ENCODE measurements at regions of chr17 and their contacts with region 1.

Region 1: GRCh38 chr17:73371285-73371684 is 59.5 kb upstream of the CDC42EP4 start:
- DNase-seq: no peak
- ATAC-seq: no peak
- H3K4me3 ChIP-seq: no peak overlapping the region
- H3K4me3 Mint-ChIP-seq: no peak overlapping the region
- H3K27ac ChIP-seq: no peak overlapping the region
- H3K27ac Mint-ChIP-seq: no peak overlapping the region
- H3K4me1 ChIP-seq: no peaks in the 10 kb centered on the region
- H3K4me1 Mint-ChIP-seq: no peaks in the 10 kb centered on the region
- H3K27me3 ChIP-seq: no peaks in the 10 kb centered on the region
- H3K27me3 Mint-ChIP-seq: no peaks in the 10 kb centered on the region
- CTCF ChIP-seq: no peak

Region 2: GRCh38 chr17:72556944-72557826 is 814.1 kb before region 1 on chr17:
- CTCF ChIA-PET with region 1: interaction called, 48 read pairs
- POLR2A ChIA-PET with region 1: no interaction called
- intact Hi-C with region 1: loop called (anchors 1 kb)
- DNase-seq: peak; percentile 15 to 62 (median 47)
- ATAC-seq: no peak
- H3K4me3 ChIP-seq: no peak overlapping the region
- H3K4me3 Mint-ChIP-seq: no peak overlapping the region
- H3K27ac ChIP-seq: no peak overlapping the region
- H3K27ac Mint-ChIP-seq: no peak overlapping the region
- H3K4me1 ChIP-seq: no peaks in the 10 kb centered on the region
- H3K4me1 Mint-ChIP-seq: no peaks in the 10 kb centered on the region
- H3K27me3 ChIP-seq: no peaks in the 10 kb centered on the region
- H3K27me3 Mint-ChIP-seq: peaks cover 2% of the 10 kb centered on the region
- CTCF ChIP-seq: peak; percentile 61

Region 3: GRCh38 chr17:72725433-72726068 is 645.7 kb before region 1 on chr17:
- CTCF ChIA-PET with region 1: interaction called, 135 read pairs
- POLR2A ChIA-PET with region 1: interaction called, 3 read pairs
- intact Hi-C with region 1: loop called in 1 of 2 experiments (anchors 1 kb)
- DNase-seq: peak in 8 of 9 experiments; percentile 10 to 65 (median 48)
- ATAC-seq: peak; percentile 37
- H3K4me3 ChIP-seq: no peak overlapping the region
- H3K4me3 Mint-ChIP-seq: peak overlapping the region; percentile 7
- H3K27ac ChIP-seq: no peak overlapping the region
- H3K27ac Mint-ChIP-seq: peak overlapping the region; percentile 28
- H3K4me1 ChIP-seq: peaks cover 29% of the 10 kb centered on the region
- H3K4me1 Mint-ChIP-seq: peaks cover 32% of the 10 kb centered on the region
- H3K27me3 ChIP-seq: no peaks in the 10 kb centered on the region
- H3K27me3 Mint-ChIP-seq: no peaks in the 10 kb centered on the region
- CTCF ChIP-seq: peak; percentile 92

Region 4: DNA sequence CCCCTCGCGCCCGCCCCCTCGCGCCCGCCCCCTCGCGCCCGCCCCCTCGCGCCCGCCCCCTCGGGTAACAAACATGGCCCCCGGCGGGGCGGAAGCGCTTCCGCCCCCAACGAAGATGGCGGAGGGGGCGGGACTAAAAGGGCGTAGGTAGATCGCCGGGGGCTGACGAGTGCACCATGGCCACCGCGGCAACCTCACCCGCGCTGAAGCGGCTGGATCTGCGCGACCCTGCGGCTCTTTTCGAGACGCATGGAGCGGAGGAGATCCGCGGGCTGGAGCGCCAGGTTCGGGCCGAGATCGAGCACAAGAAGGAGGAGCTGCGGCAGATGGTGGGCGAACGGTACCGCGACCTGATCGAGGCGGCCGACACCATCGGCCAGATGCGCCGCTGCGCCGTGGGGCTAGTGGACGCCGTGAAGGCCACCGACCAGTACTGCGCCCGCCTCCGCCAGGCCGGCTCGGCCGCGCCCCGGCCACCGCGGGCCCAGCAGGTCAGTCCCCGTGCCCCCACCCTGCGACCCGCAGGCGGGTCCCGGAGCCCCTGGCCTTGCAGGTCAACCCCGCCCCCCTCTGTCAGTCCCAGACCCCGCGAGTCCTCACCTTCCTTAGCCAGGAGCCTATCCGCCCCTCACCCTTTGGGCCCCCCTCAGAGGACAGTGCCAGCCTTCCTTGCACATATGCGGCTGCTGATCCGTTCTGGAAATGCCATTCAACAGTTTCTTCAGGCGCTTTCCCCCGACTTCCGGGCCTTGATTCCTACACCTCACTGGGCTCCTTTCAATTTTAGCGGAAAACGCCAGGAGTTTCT is 178.2 kb before region 1 on chr17 and contains the start of gene COG1:
- CTCF ChIA-PET with region 1: interaction called, 43 read pairs
- POLR2A ChIA-PET with region 1: no interaction called
- intact Hi-C with region 1: loop called in 1 of 2 experiments (anchors 1 kb)
- DNase-seq: peak; percentile 76 to 95 (median 89)
- ATAC-seq: peak; percentile 87
- H3K4me3 ChIP-seq: peak within 1 kb of the TSS; percentile 81 to 91
- H3K4me3 Mint-ChIP-seq: peak within 1 kb of the TSS; percentile 98
- H3K27ac ChIP-seq: peak within 1 kb of the TSS; percentile 79 to 83
- H3K27ac Mint-ChIP-seq: peak within 1 kb of the TSS; percentile 95
- H3K4me1 ChIP-seq: peaks cover 20% of the 10 kb centered on the region
- H3K4me1 Mint-ChIP-seq: peaks cover 27% of the 10 kb centered on the region
- H3K27me3 ChIP-seq: no peaks in the 10 kb centered on the region
- H3K27me3 Mint-ChIP-seq: no peaks in the 10 kb centered on the region
- CTCF ChIP-seq: no peak
- total RNA-seq, gene COG1: 91.3 to 95.6 TPM

Region 5: DNA sequence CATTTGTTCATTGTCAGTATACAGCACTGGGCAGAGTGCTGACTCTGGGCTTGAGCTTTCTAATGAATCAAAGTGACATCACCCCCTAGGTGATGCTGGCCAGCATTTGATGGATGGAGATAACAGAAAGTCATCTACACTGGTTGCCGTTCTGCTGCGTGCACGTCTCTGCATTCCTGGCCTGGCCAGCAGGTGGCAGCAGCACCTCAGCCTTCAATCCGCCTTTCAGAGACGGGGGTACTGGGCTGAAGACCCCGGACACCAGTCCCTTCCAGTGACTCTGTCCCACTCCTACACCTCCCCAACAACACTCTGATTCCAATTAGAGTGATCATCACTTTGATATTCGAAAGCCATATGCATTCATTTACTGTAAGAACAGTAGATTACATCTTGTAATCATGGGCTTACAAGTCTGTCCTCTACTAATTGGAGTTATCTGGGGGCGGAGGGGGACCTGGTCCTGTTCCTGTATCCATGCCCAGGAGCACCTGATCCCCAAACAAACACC is 115.6 kb before region 1 on chr17:
- CTCF ChIA-PET with region 1: interaction called, 110 read pairs
- POLR2A ChIA-PET with region 1: no interaction called
- intact Hi-C with region 1: loop called in 1 of 2 experiments (anchors 1 kb)
- DNase-seq: peak; percentile 18 to 74 (median 59)
- ATAC-seq: peak; percentile 74
- H3K4me3 ChIP-seq: no peak overlapping the region
- H3K4me3 Mint-ChIP-seq: no peak overlapping the region
- H3K27ac ChIP-seq: no peak overlapping the region
- H3K27ac Mint-ChIP-seq: no peak overlapping the region
- H3K4me1 ChIP-seq: no peaks in the 10 kb centered on the region
- H3K4me1 Mint-ChIP-seq: peaks cover 4% of the 10 kb centered on the region
- H3K27me3 ChIP-seq: no peaks in the 10 kb centered on the region
- H3K27me3 Mint-ChIP-seq: peaks cover 2% of the 10 kb centered on the region
- CTCF ChIP-seq: peak; percentile 98

Region 6: DNA sequence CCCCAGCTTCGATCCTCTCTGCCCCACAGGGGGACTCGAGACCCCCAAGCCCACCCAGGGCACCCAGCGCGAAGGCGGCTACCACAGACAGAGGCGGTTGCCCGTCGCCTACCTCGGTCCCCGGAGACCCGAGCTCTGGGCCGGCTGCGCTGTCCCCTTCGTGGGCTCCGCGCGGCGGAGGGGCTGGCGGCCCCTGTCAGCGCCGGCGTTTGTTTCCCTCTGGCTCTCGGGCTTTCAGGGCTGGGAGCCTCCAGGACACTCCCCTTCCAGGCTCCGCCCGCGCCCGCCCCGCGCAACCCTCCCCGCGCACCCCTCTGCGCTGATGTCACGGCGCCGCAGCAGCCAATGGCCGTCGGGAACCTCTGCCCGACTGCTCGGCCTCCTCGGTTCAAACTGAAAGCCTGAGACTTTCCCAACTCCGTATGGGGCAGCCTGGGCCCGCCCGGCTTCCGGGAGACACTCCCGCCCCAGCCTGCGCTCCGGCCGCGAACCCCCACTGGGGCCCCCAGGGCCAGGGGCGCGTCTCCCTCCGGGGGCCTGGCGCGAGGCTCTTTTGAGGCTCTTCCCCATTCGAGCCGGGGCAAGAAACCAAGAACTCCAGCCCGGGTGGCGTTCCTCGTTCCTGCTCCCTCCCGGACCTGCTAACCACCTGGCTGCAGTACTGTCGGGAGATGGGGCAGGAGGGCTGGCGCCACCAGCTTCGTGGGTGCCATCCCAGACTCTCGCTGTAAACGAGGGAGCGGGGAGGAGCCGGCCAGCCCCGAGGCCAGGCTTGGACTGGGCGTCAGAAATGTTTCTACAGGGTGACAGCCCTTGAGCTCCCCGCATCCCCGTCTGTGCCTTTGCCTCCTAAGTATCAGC is 59.3 kb before region 1 on chr17 and contains the start of gene CDC42EP4:
- CTCF ChIA-PET with region 1: interaction called, 6 read pairs
- POLR2A ChIA-PET with region 1: no interaction called
- intact Hi-C with region 1: loop called in 1 of 2 experiments (anchors 5 kb)
- DNase-seq: peak; percentile 59 to 89 (median 82)
- ATAC-seq: peak; percentile 90
- H3K4me3 ChIP-seq: peak within 1 kb of the TSS; percentile 61 to 86
- H3K4me3 Mint-ChIP-seq: peak within 1 kb of the TSS; percentile 87
- H3K27ac ChIP-seq: peak within 1 kb of the TSS; percentile 11 to 64
- H3K27ac Mint-ChIP-seq: peak within 1 kb of the TSS; percentile 62
- H3K4me1 ChIP-seq: peaks cover 14% of the 10 kb centered on the region
- H3K4me1 Mint-ChIP-seq: peaks cover 17% of the 10 kb centered on the region
- H3K27me3 ChIP-seq: no peaks in the 10 kb centered on the region
- H3K27me3 Mint-ChIP-seq: no peaks in the 10 kb centered on the region
- CTCF ChIP-seq: no peak
- total RNA-seq, gene CDC42EP4: 3.5 to 4.4 TPM

Region 7: DNA sequence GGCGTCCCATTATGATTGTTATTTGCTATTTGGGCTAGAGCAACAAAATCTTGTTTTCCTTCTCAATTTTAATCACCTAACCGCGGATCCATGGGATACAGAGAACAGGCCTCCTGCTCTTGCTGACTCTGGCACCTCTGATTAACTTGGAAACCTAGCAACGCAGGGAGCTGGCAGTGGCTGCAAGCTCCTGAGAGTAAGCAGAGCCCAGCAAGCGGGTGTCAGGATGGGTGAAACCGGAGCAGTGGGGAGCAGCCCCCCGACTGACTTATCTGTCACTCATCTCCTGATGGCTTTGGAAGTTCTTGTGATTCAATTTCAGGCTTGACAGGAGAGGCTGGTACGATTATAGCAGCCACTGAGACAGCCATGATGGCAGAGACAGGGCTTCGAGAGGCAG is 14.0 kb before region 1 on chr17:
- CTCF ChIA-PET with region 1: interaction called, 14 read pairs
- POLR2A ChIA-PET with region 1: no interaction called
- intact Hi-C with region 1: no loop called
- DNase-seq: no peak
- ATAC-seq: no peak
- H3K4me3 ChIP-seq: no peak overlapping the region
- H3K4me3 Mint-ChIP-seq: no peak overlapping the region
- H3K27ac ChIP-seq: no peak overlapping the region
- H3K27ac Mint-ChIP-seq: no peak overlapping the region
- H3K4me1 ChIP-seq: no peaks in the 10 kb centered on the region
- H3K4me1 Mint-ChIP-seq: no peaks in the 10 kb centered on the region
- H3K27me3 ChIP-seq: no peaks in the 10 kb centered on the region
- H3K27me3 Mint-ChIP-seq: no peaks in the 10 kb centered on the region
- CTCF ChIP-seq: no peak

Region 8: GRCh38 chr17:73770115-73770848 is 399.0 kb after region 1 on chr17:
- CTCF ChIA-PET with region 1: no interaction called
- POLR2A ChIA-PET with region 1: no interaction called
- intact Hi-C with region 1: no loop called
- DNase-seq: no peak
- ATAC-seq: no peak
- H3K4me3 ChIP-seq: no peak overlapping the region
- H3K4me3 Mint-ChIP-seq: no peak overlapping the region
- H3K27ac ChIP-seq: no peak overlapping the region
- H3K27ac Mint-ChIP-seq: no peak overlapping the region
- H3K4me1 ChIP-seq: no peaks in the 10 kb centered on the region
- H3K4me1 Mint-ChIP-seq: no peaks in the 10 kb centered on the region
- H3K27me3 ChIP-seq: no peaks in the 10 kb centered on the region
- H3K27me3 Mint-ChIP-seq: no peaks in the 10 kb centered on the region
- CTCF ChIP-seq: no peak